ENCODE measurements at regions of chr3 and their contacts with region 1.

Region 1: DNA sequence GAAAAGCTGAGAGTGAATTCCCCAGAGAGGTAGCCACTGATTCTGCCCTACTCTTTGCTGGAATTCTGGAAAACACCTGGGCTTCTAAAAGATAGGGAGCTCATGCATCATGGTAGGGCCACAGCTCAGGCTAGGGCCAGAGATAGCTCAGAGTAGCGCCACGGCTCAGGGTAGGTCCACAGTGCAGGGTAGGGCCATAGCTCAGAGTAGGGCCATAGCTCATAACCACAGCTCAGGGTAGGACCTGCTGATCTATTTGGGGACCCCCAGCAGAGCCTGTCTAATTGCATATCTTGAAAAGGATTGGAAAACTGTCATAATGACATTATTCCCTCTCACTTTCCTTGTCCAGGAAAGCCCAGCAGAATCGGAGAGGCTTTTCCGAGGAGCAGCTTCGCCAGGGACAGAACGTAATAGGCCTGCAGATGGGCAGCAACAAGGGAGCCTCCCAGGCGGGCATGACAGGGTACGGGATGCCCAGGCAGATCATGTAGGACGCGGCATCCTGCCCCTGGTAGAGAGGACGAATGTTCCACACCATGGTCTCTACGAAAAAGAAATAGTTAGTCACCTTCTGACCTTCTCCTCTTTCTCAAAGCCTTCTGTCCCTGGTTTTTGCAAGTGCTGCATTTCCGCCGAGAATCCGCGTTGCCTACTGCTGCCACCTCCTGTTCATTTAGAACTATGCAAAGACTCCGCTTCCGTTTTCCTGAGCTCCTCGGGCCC is 14.5 kb downstream of the TAGLN3 start:
- DNase-seq: peak; percentile 60 to 74 (median 70)
- ATAC-seq: peak; percentile 58 to 91 (median 82)
- H3K4me3 ChIP-seq: no peak overlapping the region
- H3K27ac ChIP-seq: peak overlapping the region in 11 of 12 donors; percentile 7 to 77 (median 65)
- H3K4me1 ChIP-seq: peaks cover 0 to 40% (median 20%) of the 10 kb centered on the region in 12 donors
- H3K27me3 ChIP-seq: no peaks in the 10 kb centered on the region
- CTCF ChIP-seq: peak; percentile 64 to 85 (median 76)
- POLR2A ChIP-seq: no peak

Region 2: GRCh38 chr3:111668912-111669488 is 344.2 kb before region 1 on chr3:
- intact Hi-C with region 1: loop called in 3 of 10 experiments (anchors 2 kb)
- DNase-seq: no peak
- ATAC-seq: peak; percentile 65 to 91 (median 83)
- H3K4me3 ChIP-seq: no peak overlapping the region
- H3K27ac ChIP-seq: peak overlapping the region in 1 of 12 donors; percentile 2
- H3K4me1 ChIP-seq: peaks cover 0 to 28% (median 8%) of the 10 kb centered on the region in 12 donors
- H3K27me3 ChIP-seq: no peaks in the 10 kb centered on the region
- CTCF ChIP-seq: peak; percentile 63 to 88 (median 78)
- POLR2A ChIP-seq: no peak

Region 3: DNA sequence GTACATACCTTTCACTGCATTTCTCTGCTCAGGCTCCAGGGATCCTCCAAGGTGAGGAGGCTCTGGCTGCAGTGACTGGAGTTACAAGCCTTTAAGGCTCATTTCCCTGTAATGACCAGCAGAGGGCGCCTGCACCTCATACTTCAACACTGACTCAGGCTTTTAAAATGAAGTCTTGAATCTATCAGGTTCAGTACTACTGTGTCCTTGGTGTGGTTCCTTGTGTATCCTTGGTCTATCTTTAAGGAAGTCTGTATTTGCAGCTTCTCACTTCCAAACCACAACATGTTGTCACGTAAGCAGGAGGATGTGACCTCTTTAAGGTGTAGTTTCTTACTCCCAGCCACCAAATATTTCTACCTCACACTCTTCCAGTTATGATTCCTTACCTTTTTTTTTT is 295.6 kb before region 1 on chr3:
- intact Hi-C with region 1: loop called in 4 of 10 experiments (anchors 1 to 2 kb)
- DNase-seq: peak in 4 of 5 donors; percentile 71 to 79 (median 75)
- ATAC-seq: peak; percentile 71 to 90 (median 90)
- H3K4me3 ChIP-seq: no peak overlapping the region
- H3K27ac ChIP-seq: peak overlapping the region in 7 of 12 donors; percentile 8 to 49 (median 28)
- H3K4me1 ChIP-seq: peaks cover 0 to 29% (median 11%) of the 10 kb centered on the region in 12 donors
- H3K27me3 ChIP-seq: no peaks in the 10 kb centered on the region
- CTCF ChIP-seq: peak; percentile 91 to 99 (median 95)
- POLR2A ChIP-seq: no peak

Region 4: GRCh38 chr3:111978493-111979433 is 34.5 kb before region 1 on chr3 and contains the start of gene ABHD10:
- intact Hi-C with region 1: loop called in 1 of 10 experiments (anchors 5 kb)
- DNase-seq: peak; percentile 96 to 99 (median 99)
- ATAC-seq: peak; percentile 97 to 98 (median 98)
- H3K4me3 ChIP-seq: peak within 1 kb of the TSS; percentile 68 to 93 (median 80)
- H3K27ac ChIP-seq: peak within 1 kb of the TSS; percentile 60 to 91 (median 85)
- H3K4me1 ChIP-seq: peaks cover 0 to 38% (median 25%) of the 10 kb centered on the region in 12 donors
- H3K27me3 ChIP-seq: no peaks in the 10 kb centered on the region
- CTCF ChIP-seq: no peak
- POLR2A ChIP-seq: peak in 1 of 2 donors; percentile 90
- total RNA-seq, gene ABHD10: 26.5 to 50.1 (median 41.8) TPM

Region 5: DNA sequence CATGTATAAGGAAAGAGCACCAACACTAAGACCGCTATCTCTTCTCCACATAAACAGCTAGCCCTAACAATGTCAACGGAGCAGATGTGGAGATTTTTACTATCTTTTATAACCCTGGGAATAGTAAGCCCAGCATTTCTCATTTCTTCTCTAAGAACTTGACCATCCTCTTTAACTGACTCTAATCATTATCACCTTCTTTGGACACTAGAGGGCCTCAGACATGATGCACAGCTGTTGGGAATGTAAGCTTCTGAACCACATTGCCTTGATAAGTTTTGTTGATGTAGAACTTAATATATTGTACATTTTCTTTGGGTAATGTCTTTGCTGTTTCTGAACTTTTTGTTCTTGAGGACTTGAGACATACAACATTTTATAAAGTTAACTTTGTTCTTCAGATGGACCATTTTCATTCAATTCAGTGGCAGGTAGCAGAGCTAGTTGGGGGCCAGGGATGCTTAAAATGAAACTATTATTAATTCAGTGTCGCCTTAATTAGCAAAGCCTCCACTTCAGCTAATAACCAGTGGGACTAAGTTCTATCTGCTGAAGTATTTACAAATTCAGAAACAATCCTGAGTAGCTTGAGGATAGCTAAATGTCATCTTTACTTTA is 24.1 kb before region 1 on chr3:
- intact Hi-C with region 1: loop called in 2 of 10 experiments (anchors 1 to 2 kb)
- DNase-seq: no peak
- ATAC-seq: peak; percentile 51 to 85 (median 70)
- H3K4me3 ChIP-seq: no peak overlapping the region
- H3K27ac ChIP-seq: no peak overlapping the region
- H3K4me1 ChIP-seq: peaks cover 0 to 6% (median 0%) of the 10 kb centered on the region in 12 donors
- H3K27me3 ChIP-seq: no peaks in the 10 kb centered on the region
- CTCF ChIP-seq: peak; percentile 47 to 81 (median 62)
- POLR2A ChIP-seq: no peak

Region 6: GRCh38 chr3:112056451-112056978 is 43.3 kb after region 1 on chr3:
- intact Hi-C with region 1: no loop called
- DNase-seq: no peak
- ATAC-seq: no peak
- H3K4me3 ChIP-seq: no peak overlapping the region
- H3K27ac ChIP-seq: no peak overlapping the region
- H3K4me1 ChIP-seq: no peaks in the 10 kb centered on the region
- H3K27me3 ChIP-seq: peaks cover 0 to 2% (median 0%) of the 10 kb centered on the region in 9 donors
- CTCF ChIP-seq: no peak
- POLR2A ChIP-seq: no peak

Region 7: DNA sequence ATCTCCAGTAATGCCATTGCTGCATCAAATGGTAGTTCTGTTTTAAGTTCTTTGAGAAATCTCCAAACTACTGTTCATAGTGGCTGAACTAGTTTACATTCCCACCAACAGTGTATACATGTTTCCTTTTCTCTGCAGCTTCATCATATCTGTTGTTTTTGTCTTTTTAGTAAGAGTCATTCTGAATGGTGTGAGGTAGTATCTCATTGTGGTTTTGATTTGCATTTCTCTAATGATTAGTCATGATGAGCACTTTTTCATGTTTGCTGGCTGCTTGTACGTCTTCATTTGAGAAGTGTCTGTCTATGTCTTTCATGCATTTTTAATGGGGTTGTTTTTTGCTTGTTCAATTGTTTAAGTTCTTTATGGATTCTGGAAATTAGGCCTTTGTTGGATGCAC is 130.0 kb after region 1 on chr3:
- intact Hi-C with region 1: no loop called
- DNase-seq: no peak
- ATAC-seq: no peak
- H3K4me3 ChIP-seq: no peak overlapping the region
- H3K27ac ChIP-seq: no peak overlapping the region
- H3K4me1 ChIP-seq: peaks cover 0 to 4% (median 0%) of the 10 kb centered on the region in 12 donors
- H3K27me3 ChIP-seq: no peaks in the 10 kb centered on the region
- CTCF ChIP-seq: no peak
- POLR2A ChIP-seq: no peak